HEK293T (cell line): ENCODE measurements at regions of chr6 and their contacts with region 1.

Region 1: DNA sequence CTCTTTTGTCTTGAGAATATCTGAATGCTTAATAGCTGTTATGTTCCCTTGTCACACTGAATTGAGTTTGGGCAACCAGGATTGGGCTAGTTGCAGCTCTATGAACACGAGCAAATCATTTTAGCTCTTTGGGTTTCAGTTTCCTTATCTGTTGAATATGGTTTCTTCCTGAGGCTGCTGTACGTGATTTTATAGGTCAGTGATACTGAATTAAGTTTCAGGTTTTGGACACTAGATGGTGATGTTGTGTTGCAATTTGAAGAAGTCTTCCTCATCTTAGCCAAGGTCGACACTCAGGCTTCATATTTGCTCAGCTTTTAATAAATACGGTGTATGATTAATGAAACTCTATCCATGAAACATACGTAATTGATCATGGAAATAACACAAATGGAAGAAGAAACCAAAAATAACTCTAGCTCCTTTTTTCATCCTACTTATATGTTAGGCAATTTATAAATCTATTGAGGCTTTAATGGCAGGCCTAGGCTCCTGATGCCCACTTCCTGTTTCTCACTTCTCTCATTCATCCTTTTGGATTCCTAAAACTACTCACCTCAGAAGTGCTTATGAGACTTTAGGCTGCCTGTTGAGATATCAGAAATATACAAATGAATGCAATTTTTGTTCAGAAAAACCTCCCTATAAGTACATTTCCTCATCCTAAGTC is 354.1 kb upstream of the MAP3K7 start:
- DNase-seq: peak; percentile 45

Region 2: DNA sequence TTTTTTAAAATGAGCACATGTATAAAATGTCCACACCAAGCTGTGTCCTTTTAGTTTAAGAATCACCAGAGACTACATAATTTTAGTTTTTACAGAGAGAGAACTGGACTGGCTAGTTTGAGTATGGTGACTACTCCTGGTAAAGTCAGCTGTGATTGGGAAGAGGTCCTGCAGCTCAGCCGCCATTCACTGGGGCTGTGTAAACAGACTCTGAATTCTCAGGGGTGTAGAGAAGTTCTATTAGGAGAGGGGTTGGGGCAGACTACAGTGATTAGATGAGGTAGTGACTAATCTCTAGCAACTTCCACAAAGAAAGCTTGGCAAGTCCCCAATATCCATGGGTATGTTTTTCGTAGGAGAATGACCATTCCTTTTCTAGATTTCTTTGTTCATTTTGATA is 12.9 kb before region 1 on chr6:
- CTCF ChIA-PET with region 1: interaction called, 10 read pairs
- POLR2A ChIA-PET with region 1: no interaction called
- DNase-seq: no peak